Adrenal gland (tissue), 19 donors: ENCODE measurements at regions of chr6 and their contacts with region 1.

Region 1: GRCh38 chr6:41779793-41780545 is at the start of gene FRS3:
- DNase-seq: peak; percentile 97 to 99 (median 98)
- H3K4me3 ChIP-seq: peak within 1 kb of the TSS in 2 of 4 donors; percentile 75 to 82
- H3K27ac ChIP-seq: peak within 1 kb of the TSS in 4 of 5 donors; percentile 44 to 80 (median 74)
- H3K4me1 ChIP-seq: peaks cover 19 to 21% of the 10 kb centered on the region in 2 donors
- H3K27me3 ChIP-seq: no peaks in the 10 kb centered on the region
- CTCF ChIP-seq: peak; percentile 77 to 98 (median 88)
- POLR2A ChIP-seq: peak in 1 of 2 donors; percentile 12
- total RNA-seq, gene FRS3: 0.30 to 12.1 (median 5.2) TPM

Region 2: DNA sequence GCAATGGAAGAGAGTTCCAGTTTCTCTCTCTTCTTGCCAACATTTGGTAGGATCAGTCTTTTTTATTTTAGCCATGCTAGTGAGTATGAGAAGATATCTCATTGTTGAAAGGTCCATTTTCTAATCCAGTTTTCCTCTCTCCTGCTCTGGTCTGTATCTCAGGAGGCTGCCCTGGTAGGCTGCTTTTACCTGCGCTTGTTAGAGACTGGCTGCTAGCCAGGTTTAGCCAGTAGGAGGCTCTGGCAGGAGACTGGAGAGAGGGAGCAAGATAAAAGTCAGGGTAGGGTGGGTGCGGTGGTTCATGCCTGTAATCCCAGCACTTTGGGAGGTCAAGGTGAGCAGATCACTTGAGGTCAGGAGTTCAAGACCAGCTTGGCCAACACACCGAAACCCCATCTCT is 302.4 kb before region 1 on chr6:
- intact Hi-C with region 1: no loop called
- DNase-seq: no peak
- H3K4me3 ChIP-seq: no peak overlapping the region
- H3K27ac ChIP-seq: no peak overlapping the region
- H3K4me1 ChIP-seq: no peaks in the 10 kb centered on the region
- H3K27me3 ChIP-seq: no peaks in the 10 kb centered on the region
- CTCF ChIP-seq: no peak
- POLR2A ChIP-seq: no peak

Region 3: GRCh38 chr6:41602864-41603608 is 176.9 kb before region 1 on chr6:
- intact Hi-C with region 1: loop called in 1 of 2 experiments (anchors 10 kb)
- DNase-seq: peak; percentile 78 to 90 (median 81)
- H3K4me3 ChIP-seq: peak overlapping the region in 1 of 4 donors; percentile 33
- H3K27ac ChIP-seq: no peak overlapping the region
- H3K4me1 ChIP-seq: peaks cover 0 to 10% of the 10 kb centered on the region in 2 donors
- H3K27me3 ChIP-seq: no peaks in the 10 kb centered on the region
- CTCF ChIP-seq: peak; percentile 72 to 92 (median 88)
- POLR2A ChIP-seq: no peak

Region 4: GRCh38 chr6:41700463-41701347 is 79.3 kb before region 1 on chr6:
- intact Hi-C with region 1: loop called (anchors 5 to 10 kb)
- DNase-seq: no peak
- H3K4me3 ChIP-seq: no peak overlapping the region
- H3K27ac ChIP-seq: no peak overlapping the region
- H3K4me1 ChIP-seq: peaks cover 4 to 10% of the 10 kb centered on the region in 2 donors
- H3K27me3 ChIP-seq: no peaks in the 10 kb centered on the region
- CTCF ChIP-seq: no peak
- POLR2A ChIP-seq: no peak

Region 5: GRCh38 chr6:41705996-41706835 is 73.8 kb before region 1 on chr6:
- intact Hi-C with region 1: loop called (anchors 5 to 10 kb)
- DNase-seq: peak; percentile 86 to 94 (median 93)
- H3K4me3 ChIP-seq: peak overlapping the region in 1 of 4 donors; percentile 7
- H3K27ac ChIP-seq: peak overlapping the region; percentile 62 to 96 (median 77)
- H3K4me1 ChIP-seq: peaks cover 19 to 34% of the 10 kb centered on the region in 2 donors
- H3K27me3 ChIP-seq: no peaks in the 10 kb centered on the region
- CTCF ChIP-seq: peak; percentile 75 to 90 (median 87)
- POLR2A ChIP-seq: peak in 1 of 2 donors; percentile 45

Region 6: GRCh38 chr6:42043787-42044475 is 264.0 kb after region 1 on chr6:
- intact Hi-C with region 1: loop called (anchors 5 kb)
- DNase-seq: peak; percentile 87 to 95 (median 90)
- H3K4me3 ChIP-seq: peak overlapping the region in 1 of 4 donors; percentile 35
- H3K27ac ChIP-seq: peak overlapping the region in 3 of 5 donors; percentile 55 to 89 (median 75)
- H3K4me1 ChIP-seq: peaks cover 30 to 58% of the 10 kb centered on the region in 2 donors
- H3K27me3 ChIP-seq: no peaks in the 10 kb centered on the region
- CTCF ChIP-seq: peak; percentile 95 to 99 (median 98)
- POLR2A ChIP-seq: no peak